ENCODE measurements at regions of chr14 and their contacts with region 1.

Region 1: GRCh38 chr14:75328558-75329155 is 50.0 kb downstream of the FOS start:
- DNase-seq: peak in 1 of 3 donors; percentile 30
- H3K4me3 ChIP-seq: no peak overlapping the region
- H3K4me3 Mint-ChIP-seq: no peak overlapping the region
- H3K27ac ChIP-seq: no peak overlapping the region
- H3K27ac Mint-ChIP-seq: peak overlapping the region in 3 of 7 donors; percentile 44 to 76 (median 69)
- H3K4me1 ChIP-seq: peaks cover 41 to 46% of the 10 kb centered on the region in 2 donors
- H3K4me1 Mint-ChIP-seq: peaks cover 43% of the 10 kb centered on the region
- H3K27me3 ChIP-seq: no peaks in the 10 kb centered on the region
- H3K27me3 Mint-ChIP-seq: peaks cover 0 to 5% (median 2%) of the 10 kb centered on the region in 3 donors
- CTCF ChIP-seq: no peak

Region 2: DNA sequence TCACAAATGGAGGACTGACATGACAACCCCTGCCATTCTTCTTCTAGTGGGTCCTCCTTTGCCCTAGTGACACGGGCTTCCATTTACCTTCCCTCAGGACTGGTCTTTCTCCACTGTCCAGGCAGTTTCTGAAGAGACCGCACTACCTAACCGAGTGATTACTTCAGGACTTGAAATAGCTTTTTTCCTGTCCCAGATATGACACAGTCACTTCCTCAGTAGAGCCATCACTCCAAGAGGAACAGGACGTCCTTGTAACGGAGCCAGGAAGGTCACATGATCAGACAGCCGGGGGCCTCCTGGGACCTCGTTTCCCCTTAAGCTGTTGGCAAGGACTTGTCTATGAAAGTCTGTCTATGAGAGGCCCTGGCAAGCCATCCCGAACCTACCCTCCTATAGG is 12.3 kb after region 1 on chr14:
- intact Hi-C with region 1: loop called in 1 of 2 experiments (anchors 2 kb)
- DNase-seq: peak; percentile 53 to 89 (median 87)
- H3K4me3 ChIP-seq: peak overlapping the region in 2 of 3 experiments; percentile 7 to 62
- H3K4me3 Mint-ChIP-seq: peak overlapping the region; percentile 39 to 78
- H3K27ac ChIP-seq: peak overlapping the region; percentile 65 to 88
- H3K27ac Mint-ChIP-seq: peak overlapping the region; percentile 89 to 98 (median 96)
- H3K4me1 ChIP-seq: peaks cover 83 to 88% of the 10 kb centered on the region in 2 donors
- H3K4me1 Mint-ChIP-seq: peaks cover 79% of the 10 kb centered on the region
- H3K27me3 ChIP-seq: no peaks in the 10 kb centered on the region
- H3K27me3 Mint-ChIP-seq: peaks cover 0 to 3% (median 0%) of the 10 kb centered on the region in 3 donors
- CTCF ChIP-seq: no peak